Activated CD4-positive, alpha-beta T cell treated with anti-CD3 and anti-CD28 coated beads, Interleukin-2, amount 10 ng/mL, durations not matched to agents 24 days and 14 days (primary cell): ENCODE measurements at regions of chr11 and their contacts with region 1.

Region 1: DNA sequence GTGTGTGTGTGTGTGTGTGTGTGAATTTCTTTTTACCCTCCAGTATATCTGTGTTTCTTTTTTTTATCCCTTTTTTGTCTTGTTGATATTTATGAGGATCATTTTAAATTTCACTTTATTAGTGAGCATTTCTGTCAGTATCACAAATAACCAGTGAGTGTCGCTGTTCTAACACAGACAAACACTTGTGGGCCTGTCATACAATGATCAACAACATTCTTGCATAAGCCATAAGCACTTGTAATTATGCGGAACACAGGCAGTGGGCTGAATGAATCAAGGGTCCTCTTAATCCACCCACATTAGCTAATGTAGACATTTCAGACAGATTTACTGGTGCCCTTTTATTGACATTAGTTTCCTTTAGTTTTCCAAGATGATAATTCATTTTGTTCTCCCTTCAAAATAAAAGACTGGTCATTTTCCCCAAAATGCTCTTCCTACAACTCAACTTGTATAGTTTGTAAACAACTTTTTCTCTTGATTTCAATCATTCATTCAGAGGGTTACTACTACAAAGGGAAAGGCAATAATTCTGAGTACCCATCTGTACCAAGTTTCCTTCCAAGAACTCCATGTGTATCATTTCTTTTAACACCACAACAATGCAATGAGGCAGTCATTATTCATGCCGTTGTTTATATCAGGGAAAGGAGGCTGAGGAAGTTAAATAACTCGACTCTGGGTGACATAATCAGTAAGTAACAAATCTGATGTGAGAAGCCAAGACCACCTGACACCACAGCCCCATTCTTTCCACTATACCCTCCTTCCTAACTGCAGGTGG is 34.5 kb upstream of the ANO3 start:
- DNase-seq: no peak
- H3K4me3 Mint-ChIP-seq: no peak overlapping the region
- H3K27ac Mint-ChIP-seq: no peak overlapping the region
- H3K4me1 Mint-ChIP-seq: no peaks in the 10 kb centered on the region
- H3K27me3 Mint-ChIP-seq: no peaks in the 10 kb centered on the region

Region 2: DNA sequence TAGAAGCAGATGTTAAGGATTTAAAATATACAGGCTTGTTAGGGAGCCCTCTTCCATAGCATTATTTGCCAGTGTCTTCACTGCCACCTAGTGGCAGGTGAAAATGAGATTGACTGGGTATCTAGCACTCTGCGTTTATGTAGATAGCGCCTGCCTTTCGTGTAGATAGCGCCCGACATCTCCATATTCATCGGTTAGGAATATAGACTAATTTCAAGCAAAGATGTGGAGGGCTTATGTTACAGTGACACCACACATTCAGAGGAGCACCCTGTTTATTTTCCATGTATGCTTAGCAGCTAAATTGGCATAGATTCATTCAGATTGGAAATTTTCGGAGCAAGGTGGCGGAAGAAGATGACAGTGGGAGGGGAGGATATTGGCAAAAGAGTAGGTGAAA is 352.5 kb after region 1 on chr11:
- intact Hi-C with region 1: loop called (anchors 2 kb)
- DNase-seq: peak; percentile 79
- H3K4me3 Mint-ChIP-seq: no peak overlapping the region
- H3K27ac Mint-ChIP-seq: no peak overlapping the region
- H3K4me1 Mint-ChIP-seq: no peaks in the 10 kb centered on the region
- H3K27me3 Mint-ChIP-seq: no peaks in the 10 kb centered on the region